ENCODE measurements at regions of chr1 and their contacts with region 1.

Region 1: DNA sequence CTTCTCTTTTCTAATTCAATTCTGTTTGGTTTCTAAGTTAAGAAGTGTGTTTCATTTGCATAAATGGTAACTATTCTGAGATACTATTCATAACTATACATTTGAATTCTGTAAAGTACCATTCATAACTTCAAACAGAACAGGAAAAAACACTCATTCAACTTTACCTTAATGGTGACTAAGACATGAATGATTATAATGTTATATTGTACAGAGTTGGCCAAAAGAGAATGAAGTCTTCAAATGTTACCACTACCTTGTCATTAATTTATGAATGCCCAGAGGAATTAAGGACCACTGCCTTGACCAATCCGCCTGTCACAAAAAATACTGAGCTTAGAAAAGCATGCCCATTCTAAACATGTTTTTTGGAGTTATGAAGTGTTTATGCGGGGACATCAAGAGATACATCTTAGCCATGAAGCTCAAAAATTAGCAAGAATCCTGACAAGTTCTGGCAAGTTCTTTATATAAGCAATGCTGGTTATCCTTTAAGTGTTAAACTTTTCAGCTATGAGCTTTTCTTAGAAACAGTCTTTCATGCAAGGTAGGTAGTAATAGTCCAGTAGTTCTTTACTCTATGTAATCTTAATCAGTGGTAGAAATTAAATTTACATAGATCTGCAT is 7.9 kb downstream of the WASF2 start:
- DNase-seq: no peak
- ATAC-seq: peak; percentile 64
- H3K4me3 ChIP-seq: peak overlapping the region; percentile 60
- H3K27ac ChIP-seq: peak overlapping the region; percentile 62
- H3K4me1 ChIP-seq: peaks cover 45% of the 10 kb centered on the region
- H3K27me3 ChIP-seq: no peaks in the 10 kb centered on the region
- CTCF ChIP-seq: no peak
- EP300 ChIP-seq: 0 out of 4 replicates have a peak, but pooled peaks of 1 of the 2 experiments have one; percentile 10
- POLR2A ChIP-seq: no peak
- RAD21 ChIP-seq: no peak

Region 2: GRCh38 chr1:27225621-27226020 is 256.5 kb before region 1 on chr1:
- CTCF ChIA-PET with region 1: no interaction called
- POLR2A ChIA-PET with region 1: no interaction called
- RAD21 ChIA-PET with region 1: no interaction called
- SMC1A ChIA-PET with region 1: no interaction called
- in situ Hi-C with region 1: no loop called
- intact Hi-C with region 1: no loop called
- DNase-seq: no peak
- ATAC-seq: no peak
- H3K4me3 ChIP-seq: no peak overlapping the region
- H3K27ac ChIP-seq: no peak overlapping the region
- H3K4me1 ChIP-seq: no peaks in the 10 kb centered on the region
- H3K27me3 ChIP-seq: no peaks in the 10 kb centered on the region
- CTCF ChIP-seq: no peak
- EP300 ChIP-seq: no peak
- POLR2A ChIP-seq: no peak
- RAD21 ChIP-seq: no peak

Region 3: DNA sequence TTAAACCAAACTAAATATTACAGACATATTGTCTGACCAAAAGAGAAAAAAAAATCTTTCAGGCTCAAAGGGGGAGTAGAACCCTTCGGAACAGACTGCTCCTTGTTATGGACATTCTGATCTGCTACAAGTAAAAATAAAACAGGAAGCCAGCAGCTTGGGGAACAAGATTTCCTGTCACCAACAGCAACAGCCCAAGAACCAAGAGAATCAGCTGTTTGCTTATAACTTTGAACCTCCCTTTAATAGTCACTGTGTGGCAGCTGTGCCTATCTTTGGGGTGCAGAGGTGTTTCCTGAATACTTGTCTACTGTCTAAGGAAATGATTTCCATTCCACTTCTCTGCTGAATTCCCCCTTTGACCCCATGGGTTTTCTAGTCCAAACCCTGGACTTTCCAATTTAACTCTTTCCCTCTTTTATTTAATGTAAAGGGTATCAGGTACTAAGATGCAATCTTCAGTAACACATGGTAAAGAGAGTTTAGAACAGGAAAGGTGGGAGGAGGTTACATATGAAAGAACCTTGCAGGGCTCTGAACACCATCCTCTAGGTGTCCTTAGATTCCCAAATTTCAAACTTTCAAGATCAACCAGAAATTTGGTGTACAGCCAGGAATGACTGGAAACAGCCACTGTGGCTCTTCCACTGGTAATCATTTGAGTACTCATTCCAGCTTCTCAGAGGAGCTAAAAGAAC is 51.1 kb before region 1 on chr1:
- CTCF ChIA-PET with region 1: interaction called, 10 read pairs
- POLR2A ChIA-PET with region 1: interaction called, 4 read pairs
- RAD21 ChIA-PET with region 1: interaction called, 7 read pairs
- SMC1A ChIA-PET with region 1: interaction called, 13 read pairs
- in situ Hi-C with region 1: no loop called
- intact Hi-C with region 1: no loop called
- DNase-seq: no peak
- ATAC-seq: peak; percentile 63
- H3K4me3 ChIP-seq: peak overlapping the region; percentile 12; the same call in 1 of the 2 replicates
- H3K27ac ChIP-seq: peak overlapping the region; percentile 59
- H3K4me1 ChIP-seq: peaks cover 76% of the 10 kb centered on the region
- H3K27me3 ChIP-seq: no peaks in the 10 kb centered on the region
- CTCF ChIP-seq: 0 out of 6 replicates have a peak, but pooled peaks of 1 of the 3 experiments have one; percentile 1
- EP300 ChIP-seq: no peak
- POLR2A ChIP-seq: no peak
- RAD21 ChIP-seq: 0 out of 2 replicates have a peak, but pooled peaks have one; percentile 7

Region 4: DNA sequence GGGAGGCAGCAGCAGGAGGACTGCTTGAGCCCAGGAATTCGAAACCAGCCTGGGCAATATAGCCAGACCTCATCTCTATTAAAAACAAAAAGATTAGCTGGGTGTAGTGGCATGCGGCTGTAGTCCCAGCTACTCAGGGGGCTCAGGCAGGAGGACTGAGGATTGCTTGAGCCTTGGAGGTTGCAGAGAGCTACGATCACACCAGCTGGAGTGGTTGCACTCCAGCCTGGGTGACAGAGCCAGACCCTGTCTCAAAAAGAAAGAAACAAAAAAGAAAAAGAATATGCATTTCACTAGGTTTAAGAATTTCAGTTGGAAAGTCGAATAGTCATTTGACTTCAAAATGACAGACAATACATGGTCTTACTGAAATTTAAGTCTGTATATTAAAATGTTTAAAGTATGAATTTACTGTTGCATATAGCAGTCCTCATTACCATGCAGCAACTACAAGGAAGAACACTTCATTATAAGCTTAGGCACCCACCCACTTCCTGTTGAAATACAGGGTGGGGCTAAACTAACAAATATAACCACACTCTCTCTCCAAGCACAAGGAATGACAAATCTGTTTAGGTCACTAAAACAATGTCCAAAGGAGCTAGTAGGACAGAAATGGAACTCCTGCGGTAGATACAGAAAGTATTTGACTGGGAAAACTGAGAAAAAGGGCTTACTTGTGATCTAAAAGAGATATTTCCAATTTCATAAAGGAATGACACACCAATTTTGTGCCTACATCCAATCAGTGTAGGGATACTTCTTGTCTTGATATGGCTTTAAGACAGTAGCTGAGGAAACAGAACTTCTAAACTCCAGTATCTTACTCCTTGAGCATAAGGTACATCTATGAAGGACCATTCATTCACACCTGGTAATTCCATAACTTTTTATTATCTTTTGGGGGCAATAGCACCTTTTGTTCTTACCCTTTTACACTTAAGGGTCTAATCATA is 45.6 kb before region 1 on chr1:
- CTCF ChIA-PET with region 1: interaction called, 10 read pairs
- POLR2A ChIA-PET with region 1: interaction called, 4 read pairs
- RAD21 ChIA-PET with region 1: interaction called, 7 read pairs
- SMC1A ChIA-PET with region 1: interaction called, 12 read pairs
- in situ Hi-C with region 1: no loop called
- intact Hi-C with region 1: no loop called
- DNase-seq: no peak
- ATAC-seq: peak; percentile 75
- H3K4me3 ChIP-seq: peak overlapping the region; percentile 48
- H3K27ac ChIP-seq: peak overlapping the region; percentile 82
- H3K4me1 ChIP-seq: peaks cover 71% of the 10 kb centered on the region
- H3K27me3 ChIP-seq: no peaks in the 10 kb centered on the region
- CTCF ChIP-seq: no peak
- EP300 ChIP-seq: no peak
- POLR2A ChIP-seq: no peak
- RAD21 ChIP-seq: no peak

Region 5: DNA sequence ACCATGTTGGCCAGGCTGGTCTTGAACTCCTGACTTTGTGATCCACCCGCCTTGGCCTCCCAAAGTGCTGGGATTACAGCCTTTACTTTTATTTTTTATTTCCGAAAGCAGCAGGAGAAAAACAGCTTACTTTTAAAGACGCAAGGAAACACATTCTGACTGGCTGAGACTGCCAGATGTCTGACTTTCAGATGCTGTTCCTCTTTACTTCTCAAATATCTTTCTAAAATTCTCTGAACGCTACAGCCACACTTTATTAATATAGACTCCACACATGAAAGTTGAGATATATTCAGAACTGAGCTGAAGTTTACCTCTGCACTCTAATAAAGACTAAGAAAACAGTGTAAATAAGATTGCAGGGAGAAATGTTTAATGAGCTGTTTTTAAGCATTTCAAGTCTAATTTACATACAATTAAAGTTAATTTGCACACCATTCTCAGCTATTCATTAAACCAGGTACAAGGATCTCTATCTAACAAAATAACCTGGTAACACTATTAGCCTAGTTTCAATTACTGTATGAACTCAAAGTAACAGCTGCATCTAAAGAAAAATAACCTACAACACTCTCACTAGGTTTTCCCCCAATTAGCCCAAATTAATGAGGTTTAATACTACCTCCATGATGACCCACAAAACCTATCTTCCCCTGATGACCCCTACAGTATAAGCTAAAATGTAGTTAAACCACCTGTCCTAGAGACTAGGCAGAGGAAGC is 17.0 kb before region 1 on chr1:
- CTCF ChIA-PET with region 1: interaction called, 3 read pairs
- POLR2A ChIA-PET with region 1: interaction called, 9 read pairs
- RAD21 ChIA-PET with region 1: interaction called, 8 read pairs
- SMC1A ChIA-PET with region 1: interaction called, 37 read pairs
- in situ Hi-C with region 1: no loop called
- intact Hi-C with region 1: no loop called
- DNase-seq: no peak
- ATAC-seq: peak; percentile 66
- H3K4me3 ChIP-seq: no peak overlapping the region
- H3K27ac ChIP-seq: peak overlapping the region; percentile 41
- H3K4me1 ChIP-seq: peaks cover 15% of the 10 kb centered on the region
- H3K27me3 ChIP-seq: no peaks in the 10 kb centered on the region
- CTCF ChIP-seq: no peak
- EP300 ChIP-seq: no peak
- POLR2A ChIP-seq: no peak
- RAD21 ChIP-seq: no peak

Region 6: DNA sequence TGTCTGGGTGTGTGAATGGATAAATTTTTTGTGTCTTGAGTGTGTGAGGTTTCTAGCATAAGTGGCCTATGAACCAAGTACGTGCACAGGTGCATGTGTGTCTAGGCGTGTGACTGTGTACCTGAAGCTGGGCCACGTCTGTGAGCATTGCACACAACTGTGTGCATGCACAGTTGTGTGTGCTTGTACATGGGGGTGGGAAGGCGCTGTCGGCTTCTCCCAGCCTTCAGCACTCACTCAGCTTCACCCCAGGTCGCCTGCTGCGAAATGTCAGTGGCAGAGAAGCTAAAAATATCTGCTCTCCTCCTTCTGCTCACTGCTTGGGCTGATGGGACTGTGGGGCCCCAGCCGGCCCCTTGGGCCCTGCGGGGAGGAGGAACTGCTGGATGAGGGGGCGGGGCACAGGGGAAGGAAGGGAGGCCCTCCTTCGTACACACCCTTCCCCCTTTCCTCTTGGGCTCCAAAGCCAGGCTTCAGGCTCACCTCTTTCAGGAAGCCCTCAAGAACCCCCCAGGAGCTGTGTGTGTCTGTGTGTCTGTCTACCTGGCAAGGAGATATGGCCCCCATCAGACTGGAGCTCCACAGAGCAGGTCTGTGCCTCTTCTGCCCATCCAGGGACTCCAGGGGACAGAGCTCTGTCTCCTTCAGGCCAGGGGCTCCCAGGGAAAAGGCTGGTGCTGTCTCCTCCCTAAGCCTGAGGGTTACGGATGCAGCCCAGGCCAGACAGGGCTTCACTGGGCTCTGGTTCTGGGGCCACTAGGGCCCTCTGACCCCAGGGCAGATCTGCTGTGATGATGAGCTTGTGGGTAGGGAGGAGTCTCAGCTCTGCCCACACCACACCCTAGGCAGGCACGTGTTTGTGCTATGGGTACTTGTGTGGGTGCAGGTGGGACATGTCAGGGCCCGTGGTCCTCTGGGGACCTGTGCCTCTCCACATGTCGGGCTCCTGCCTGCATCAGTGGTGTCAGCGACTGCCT is 43.5 kb after region 1 on chr1:
- CTCF ChIA-PET with region 1: no interaction called
- POLR2A ChIA-PET with region 1: interaction called, 5 read pairs
- RAD21 ChIA-PET with region 1: interaction called, 16 read pairs
- SMC1A ChIA-PET with region 1: no interaction called
- in situ Hi-C with region 1: no loop called
- intact Hi-C with region 1: no loop called
- DNase-seq: peak; percentile 53
- ATAC-seq: peak; percentile 80
- H3K4me3 ChIP-seq: peak overlapping the region; percentile 68
- H3K27ac ChIP-seq: peak overlapping the region; percentile 87
- H3K4me1 ChIP-seq: peaks cover 34% of the 10 kb centered on the region
- H3K27me3 ChIP-seq: no peaks in the 10 kb centered on the region
- CTCF ChIP-seq: no peak
- EP300 ChIP-seq: peak in 1 of 2 experiments; percentile 29; a peak in 1 of 4 replicates
- POLR2A ChIP-seq: no peak
- RAD21 ChIP-seq: no peak; the same call in 1 of the 2 replicates

Region 7: GRCh38 chr1:27772933-27773825 is 291.1 kb after region 1 on chr1 and contains the start of gene STX12:
- CTCF ChIA-PET with region 1: no interaction called
- POLR2A ChIA-PET with region 1: no interaction called
- RAD21 ChIA-PET with region 1: no interaction called
- SMC1A ChIA-PET with region 1: no interaction called
- in situ Hi-C with region 1: no loop called
- intact Hi-C with region 1: no loop called
- DNase-seq: peak; percentile 100
- ATAC-seq: peak; percentile 93
- H3K4me3 ChIP-seq: peak within 1 kb of the TSS; percentile 81
- H3K27ac ChIP-seq: peak within 1 kb of the TSS; percentile 89
- H3K4me1 ChIP-seq: peaks cover 6% of the 10 kb centered on the region
- H3K27me3 ChIP-seq: no peaks in the 10 kb centered on the region
- CTCF ChIP-seq: no peak
- EP300 ChIP-seq: no peak
- POLR2A ChIP-seq: peak; percentile 87
- RAD21 ChIP-seq: no peak
- polyA plus RNA-seq, gene STX12: 23.5 to 26.9 TPM